ENCODE measurements at regions of chr1 and their contacts with region 1.

Region 1: GRCh38 chr1:178189814-178190213 is 95.9 kb downstream of the RASAL2 start:
- DNase-seq: peak; percentile 69 to 79 (median 78)
- H3K4me3 ChIP-seq: no peak overlapping the region
- H3K27ac ChIP-seq: no peak overlapping the region
- H3K4me1 ChIP-seq: peaks cover 0 to 14% (median 6%) of the 10 kb centered on the region in 4 experiments
- H3K27me3 ChIP-seq: no peaks in the 10 kb centered on the region

Region 2: DNA sequence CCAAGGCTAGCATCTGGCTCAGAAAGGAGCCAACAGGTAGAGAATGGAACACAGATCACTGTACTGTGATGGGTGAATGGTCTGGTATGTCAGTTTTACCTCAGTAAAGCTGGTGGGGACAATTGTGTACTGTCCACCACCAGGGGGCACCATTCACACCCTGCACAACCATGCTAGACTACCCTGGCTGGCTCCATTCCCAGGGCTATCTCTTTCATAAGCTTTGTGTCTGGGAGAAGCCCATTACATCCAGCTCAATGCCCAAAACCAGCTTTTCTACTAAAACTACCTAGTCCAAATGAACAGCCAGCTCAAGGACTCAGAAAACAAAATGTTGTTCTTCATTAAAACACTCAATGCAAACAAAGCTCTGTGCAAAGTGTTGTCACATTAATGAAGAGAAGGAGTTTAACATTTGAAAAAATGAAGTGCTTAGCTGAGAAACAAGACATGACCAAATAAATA is 157.9 kb before region 1 on chr1:
- CTCF ChIA-PET with region 1: interaction called, 57 read pairs
- POLR2A ChIA-PET with region 1: no interaction called
- DNase-seq: peak; percentile 71 to 82 (median 74)
- H3K4me3 ChIP-seq: no peak overlapping the region
- H3K27ac ChIP-seq: no peak overlapping the region
- H3K4me1 ChIP-seq: no peaks in the 10 kb centered on the region
- H3K27me3 ChIP-seq: no peaks in the 10 kb centered on the region

Region 3: GRCh38 chr1:178037503-178038253 is 152.1 kb before region 1 on chr1:
- CTCF ChIA-PET with region 1: interaction called, 57 read pairs
- POLR2A ChIA-PET with region 1: no interaction called
- DNase-seq: peak; percentile 80 to 90 (median 86)
- H3K4me3 ChIP-seq: peak overlapping the region; percentile 60 to 90 (median 78)
- H3K27ac ChIP-seq: peak overlapping the region in 1 of 2 experiments; percentile 49
- H3K4me1 ChIP-seq: peaks cover 0 to 8% (median 4%) of the 10 kb centered on the region in 4 experiments
- H3K27me3 ChIP-seq: no peaks in the 10 kb centered on the region